ENCODE measurements at regions of chr5 and their contacts with region 1.

Region 1: DNA sequence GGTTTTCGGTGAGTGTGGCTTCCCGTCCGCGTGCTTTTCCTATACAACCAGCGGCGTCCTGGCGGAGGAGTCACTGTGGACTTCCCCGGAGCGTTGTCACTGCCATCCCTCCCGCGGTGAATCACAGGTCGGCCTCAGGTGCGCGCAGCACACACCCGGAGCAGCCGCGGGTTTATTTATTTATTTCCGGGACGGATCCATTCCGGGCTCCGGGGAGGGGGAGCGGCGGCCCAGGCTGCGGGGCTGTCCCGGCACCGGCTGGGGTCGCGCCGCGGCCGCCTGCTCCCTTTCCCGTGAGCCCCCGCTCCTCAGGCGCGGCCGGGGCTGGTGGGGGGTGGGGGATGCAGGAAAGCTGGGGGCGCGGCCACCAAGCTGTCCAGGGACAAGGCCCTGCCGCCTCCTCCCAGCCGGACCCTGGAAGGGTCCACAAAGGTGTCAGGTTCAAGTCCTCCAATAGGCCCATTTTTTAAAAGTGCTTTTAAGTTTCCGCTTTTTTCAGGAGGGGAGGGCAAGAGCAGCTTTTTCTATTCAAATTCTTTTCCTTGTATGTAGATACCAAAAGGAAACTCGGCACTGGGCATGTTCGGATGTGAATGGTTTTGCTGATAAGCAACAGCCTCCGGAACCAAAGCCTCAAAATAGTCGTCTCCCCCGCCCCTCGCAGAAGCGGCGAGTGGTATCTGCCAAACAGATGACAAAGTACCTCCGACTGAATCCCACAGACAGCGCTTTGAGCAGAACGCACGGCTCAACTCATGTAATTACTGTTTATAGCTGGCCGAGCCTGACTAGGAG is 192.5 kb downstream of the CD180 start:
- DNase-seq: peak; percentile 94
- ATAC-seq: peak; percentile 78
- H3K4me3 Mint-ChIP-seq: peak overlapping the region; percentile 94
- H3K27ac Mint-ChIP-seq: peak overlapping the region; percentile 97
- H3K4me1 Mint-ChIP-seq: peaks cover 60% of the 10 kb centered on the region
- H3K27me3 Mint-ChIP-seq: no peaks in the 10 kb centered on the region

Region 2: DNA sequence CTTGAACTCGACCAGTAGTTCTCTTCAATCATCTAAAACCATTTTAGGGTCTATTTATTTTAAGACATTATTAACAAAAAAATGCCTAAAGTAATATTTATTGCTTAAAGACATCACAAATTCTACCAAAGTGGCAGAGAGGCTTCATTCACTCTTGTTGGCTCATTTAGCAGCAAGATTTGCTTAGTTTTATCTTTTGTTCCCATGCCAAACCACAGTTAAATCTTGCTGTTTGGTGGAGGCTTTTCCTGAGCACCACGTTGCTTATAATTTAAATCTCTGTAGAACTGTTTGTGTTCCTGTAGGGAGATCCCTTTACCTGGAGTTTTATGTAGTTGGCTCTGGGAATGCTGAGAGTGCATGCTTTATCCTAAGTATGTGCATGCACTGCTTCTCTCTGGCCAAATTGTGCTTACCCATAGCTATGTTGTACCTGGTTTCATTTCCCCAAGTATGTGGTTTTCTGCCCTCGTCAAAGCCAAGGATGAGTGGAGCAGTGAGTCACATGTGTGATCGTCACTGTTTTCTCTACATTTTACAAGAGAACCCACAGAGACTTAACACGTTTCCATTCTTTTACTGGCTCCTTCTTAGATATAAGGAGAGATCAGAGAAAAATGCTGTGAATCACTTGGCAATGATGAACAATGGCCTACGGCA is 450.1 kb before region 1 on chr5:
- CTCF ChIA-PET with region 1: no interaction called
- POLR2A ChIA-PET with region 1: no interaction called
- intact Hi-C with region 1: loop called in 1 of 2 experiments (anchors 10 kb)
- DNase-seq: peak; percentile 71
- ATAC-seq: peak; percentile 90
- H3K4me3 Mint-ChIP-seq: no peak overlapping the region
- H3K27ac Mint-ChIP-seq: peak overlapping the region; percentile 51
- H3K4me1 Mint-ChIP-seq: peaks cover 30% of the 10 kb centered on the region
- H3K27me3 Mint-ChIP-seq: peaks cover 24% of the 10 kb centered on the region

Region 3: DNA sequence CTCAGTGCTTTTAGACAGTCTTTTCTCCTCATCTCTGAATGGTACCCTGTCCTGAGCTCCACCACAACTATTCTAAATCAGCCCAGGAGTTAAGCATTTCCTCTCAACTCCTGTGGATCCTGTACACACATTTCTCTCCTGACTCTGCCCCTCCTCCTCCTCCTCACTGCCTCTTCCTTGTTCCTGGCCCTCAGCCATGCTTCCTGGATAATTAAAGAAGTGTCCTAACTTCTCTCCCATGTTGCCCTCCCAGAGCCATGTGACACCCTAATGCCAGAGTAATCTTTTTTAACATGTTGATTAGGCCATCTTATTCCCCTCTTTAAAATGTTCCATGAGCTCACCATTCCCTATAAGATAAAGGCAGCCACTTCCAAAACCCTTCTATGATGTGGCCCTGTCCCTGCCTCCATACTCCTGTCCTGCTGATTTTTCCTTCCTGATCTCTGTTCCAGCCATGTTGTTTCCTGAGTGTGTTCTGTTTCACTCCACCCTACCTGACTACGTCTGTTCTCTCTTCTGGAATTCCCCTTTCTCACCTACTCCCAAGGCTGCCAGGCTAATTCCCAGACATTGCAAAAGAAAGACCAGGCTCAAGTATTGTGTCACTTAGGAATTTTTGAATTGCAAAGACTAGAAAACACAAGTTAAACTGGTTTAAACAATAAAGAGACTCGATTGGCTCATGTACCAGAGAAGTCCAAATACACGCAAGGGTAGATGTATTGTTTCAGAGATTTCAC is 112.8 kb before region 1 on chr5:
- CTCF ChIA-PET with region 1: no interaction called
- POLR2A ChIA-PET with region 1: no interaction called
- intact Hi-C with region 1: no loop called
- DNase-seq: no peak
- ATAC-seq: no peak
- H3K4me3 Mint-ChIP-seq: no peak overlapping the region
- H3K27ac Mint-ChIP-seq: no peak overlapping the region
- H3K4me1 Mint-ChIP-seq: peaks cover 14% of the 10 kb centered on the region
- H3K27me3 Mint-ChIP-seq: peaks cover 22% of the 10 kb centered on the region

Region 4: DNA sequence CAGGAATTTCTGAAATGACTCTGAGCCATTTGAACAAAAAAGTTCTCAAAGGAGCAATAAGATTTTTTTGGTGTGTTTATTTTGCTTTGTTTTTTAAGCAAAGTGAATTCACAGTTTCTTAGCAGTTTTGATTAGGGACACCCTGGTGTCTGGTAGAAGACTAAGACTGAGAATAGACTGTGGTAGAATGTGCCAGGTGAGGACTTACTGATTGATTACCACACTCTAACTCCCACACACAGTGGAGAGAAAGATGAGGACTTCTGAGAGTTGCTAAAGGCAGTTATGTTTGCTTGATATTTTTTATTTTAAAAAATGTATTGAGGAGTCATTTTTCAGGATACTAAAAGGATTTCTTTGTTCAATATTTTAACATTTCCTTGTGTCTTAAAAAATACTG is 17.4 kb after region 1 on chr5:
- CTCF ChIA-PET with region 1: interaction called, 3 read pairs
- POLR2A ChIA-PET with region 1: interaction called, 6 read pairs
- intact Hi-C with region 1: loop called in 1 of 2 experiments (anchors 2 kb)
- DNase-seq: no peak
- ATAC-seq: peak; percentile 97
- H3K4me3 Mint-ChIP-seq: no peak overlapping the region
- H3K27ac Mint-ChIP-seq: no peak overlapping the region
- H3K4me1 Mint-ChIP-seq: peaks cover 55% of the 10 kb centered on the region
- H3K27me3 Mint-ChIP-seq: no peaks in the 10 kb centered on the region

Region 5: DNA sequence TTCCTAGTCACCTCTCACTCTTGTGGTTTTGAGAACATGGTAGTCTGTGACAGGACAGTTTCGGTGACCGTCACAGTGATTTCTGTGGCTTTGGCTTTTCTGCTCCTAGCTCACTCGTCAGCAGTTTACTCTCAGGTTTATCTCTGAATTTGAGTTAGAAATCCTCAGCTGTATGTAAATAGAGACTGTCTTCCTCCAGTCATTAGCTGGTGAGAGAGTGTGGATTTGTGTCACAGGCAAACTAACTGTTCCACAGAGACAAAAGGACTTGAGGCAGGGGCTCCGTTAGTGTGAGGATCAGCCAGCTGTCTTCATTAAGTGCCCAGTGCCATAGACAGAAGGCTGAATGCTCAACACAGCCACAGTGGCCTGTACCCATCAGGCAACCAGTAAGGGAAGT is 61.1 kb after region 1 on chr5:
- CTCF ChIA-PET with region 1: interaction called, 3 read pairs
- POLR2A ChIA-PET with region 1: interaction called, 3 read pairs
- intact Hi-C with region 1: loop called (anchors 1 to 2 kb)
- DNase-seq: peak; percentile 64
- ATAC-seq: peak; percentile 73
- H3K4me3 Mint-ChIP-seq: no peak overlapping the region
- H3K27ac Mint-ChIP-seq: peak overlapping the region; percentile 59
- H3K4me1 Mint-ChIP-seq: peaks cover 26% of the 10 kb centered on the region
- H3K27me3 Mint-ChIP-seq: no peaks in the 10 kb centered on the region

Region 6: DNA sequence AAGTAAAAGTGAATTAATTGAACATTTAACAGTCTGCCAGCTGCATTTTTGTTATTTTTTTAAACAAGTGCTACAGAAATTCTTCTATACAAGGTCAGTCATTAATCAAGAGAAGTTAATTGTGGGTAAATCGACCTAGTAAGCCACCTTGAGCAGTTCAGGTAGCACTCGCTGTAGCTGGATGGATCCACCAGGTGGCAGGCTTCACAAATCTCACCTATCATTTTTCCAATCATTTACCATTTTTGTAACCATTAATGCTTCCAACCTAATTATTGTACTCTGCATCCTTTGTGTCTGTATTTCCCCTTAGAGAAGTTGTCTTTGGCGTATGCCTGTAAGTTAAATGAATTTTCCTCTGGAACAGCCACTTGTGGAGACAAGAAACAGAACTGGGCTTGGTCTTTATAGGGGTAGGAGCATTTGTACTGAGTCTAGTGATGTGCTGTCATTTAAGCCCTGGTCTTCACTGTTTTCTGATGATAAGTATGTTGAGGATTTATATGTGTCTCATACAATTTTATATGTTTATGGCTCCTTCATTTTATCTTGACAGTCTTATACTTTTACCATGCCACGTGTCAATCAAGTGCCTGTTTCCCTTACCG is 152.9 kb after region 1 on chr5:
- CTCF ChIA-PET with region 1: no interaction called
- POLR2A ChIA-PET with region 1: no interaction called
- intact Hi-C with region 1: loop called in 1 of 2 experiments (anchors 5 kb)
- DNase-seq: peak; percentile 65
- ATAC-seq: peak; percentile 40
- H3K4me3 Mint-ChIP-seq: no peak overlapping the region
- H3K27ac Mint-ChIP-seq: peak overlapping the region; percentile 1
- H3K4me1 Mint-ChIP-seq: peaks cover 40% of the 10 kb centered on the region
- H3K27me3 Mint-ChIP-seq: no peaks in the 10 kb centered on the region

Region 7: DNA sequence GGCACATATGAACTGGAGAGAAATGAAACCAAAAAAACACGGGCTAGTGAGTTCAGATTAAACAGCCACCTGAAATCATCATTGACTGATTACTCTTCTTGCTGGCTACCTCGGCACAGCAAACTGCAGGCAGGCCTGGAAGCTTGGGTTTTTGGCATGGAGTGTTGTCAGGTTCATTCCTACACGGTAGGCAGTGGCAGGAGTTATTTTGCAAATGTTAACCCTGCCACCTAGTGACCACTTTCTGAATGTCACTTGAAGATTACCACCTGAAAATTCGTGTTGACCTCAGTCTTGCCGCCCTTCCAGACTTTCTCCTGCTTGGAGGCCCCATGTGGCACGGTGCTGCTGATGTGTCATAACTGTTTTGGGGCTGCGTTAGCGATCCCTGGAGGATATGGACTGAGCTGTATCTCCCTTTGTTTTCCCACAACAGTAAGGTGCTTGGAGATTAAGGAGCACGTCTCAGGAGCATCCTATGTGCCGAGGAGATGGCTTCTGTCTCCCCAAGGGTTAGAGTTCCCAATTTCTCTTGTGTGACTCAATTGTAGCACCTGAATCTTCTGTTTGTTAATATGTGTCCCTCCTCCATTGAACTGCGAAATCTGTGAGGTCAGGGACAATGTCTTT is 205.1 kb after region 1 on chr5:
- CTCF ChIA-PET with region 1: interaction called, 6 read pairs
- POLR2A ChIA-PET with region 1: interaction called, 7 read pairs
- intact Hi-C with region 1: loop called (anchors 1 to 2 kb)
- DNase-seq: peak; percentile 71
- ATAC-seq: peak; percentile 39
- H3K4me3 Mint-ChIP-seq: no peak overlapping the region
- H3K27ac Mint-ChIP-seq: peak overlapping the region; percentile 76
- H3K4me1 Mint-ChIP-seq: peaks cover 56% of the 10 kb centered on the region
- H3K27me3 Mint-ChIP-seq: no peaks in the 10 kb centered on the region

Region 8: DNA sequence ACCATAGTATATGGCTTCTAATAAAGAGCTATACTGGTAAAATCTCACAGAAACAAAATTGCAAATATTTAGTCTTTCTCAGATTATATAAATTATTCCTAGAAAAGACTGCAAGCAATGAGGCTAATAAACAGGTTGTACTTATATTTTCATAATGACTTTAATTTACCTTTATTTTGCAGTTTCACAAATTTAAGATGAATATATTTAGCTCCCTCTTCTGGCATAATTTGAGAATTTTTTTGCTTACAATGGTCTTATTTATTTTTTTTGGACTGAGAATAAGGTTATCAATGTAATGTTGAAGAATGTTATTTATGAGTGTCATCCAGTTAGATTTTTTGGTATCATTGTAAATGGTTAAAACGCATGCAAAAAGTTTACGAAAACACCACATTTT is 1268.2 kb after region 1 on chr5:
- CTCF ChIA-PET with region 1: no interaction called
- POLR2A ChIA-PET with region 1: no interaction called
- intact Hi-C with region 1: loop called in 1 of 2 experiments (anchors 10 kb)
- DNase-seq: no peak
- ATAC-seq: no peak
- H3K4me3 Mint-ChIP-seq: no peak overlapping the region
- H3K27ac Mint-ChIP-seq: no peak overlapping the region
- H3K4me1 Mint-ChIP-seq: peaks cover 81% of the 10 kb centered on the region
- H3K27me3 Mint-ChIP-seq: no peaks in the 10 kb centered on the region